Caco-2 (cell line): ENCODE measurements at regions of chr16 and their contacts with region 1.

Region 1: GRCh38 chr16:66872943-66873684 is 7.2 kb upstream of the PDP2 start:
- DNase-seq: peak; percentile 88 to 93
- H3K4me3 ChIP-seq: peak overlapping the region; percentile 46
- H3K4me3 Mint-ChIP-seq: peak overlapping the region; percentile 80
- H3K27ac Mint-ChIP-seq: peak overlapping the region; percentile 46
- H3K4me1 ChIP-seq: peaks cover 18% of the 10 kb centered on the region
- H3K4me1 Mint-ChIP-seq: peaks cover 20% of the 10 kb centered on the region
- H3K27me3 ChIP-seq: no peaks in the 10 kb centered on the region; the same call in 1 of the 2 replicates
- H3K27me3 Mint-ChIP-seq: no peaks in the 10 kb centered on the region
- CTCF ChIP-seq: peak; percentile 95 to 98

Region 2: DNA sequence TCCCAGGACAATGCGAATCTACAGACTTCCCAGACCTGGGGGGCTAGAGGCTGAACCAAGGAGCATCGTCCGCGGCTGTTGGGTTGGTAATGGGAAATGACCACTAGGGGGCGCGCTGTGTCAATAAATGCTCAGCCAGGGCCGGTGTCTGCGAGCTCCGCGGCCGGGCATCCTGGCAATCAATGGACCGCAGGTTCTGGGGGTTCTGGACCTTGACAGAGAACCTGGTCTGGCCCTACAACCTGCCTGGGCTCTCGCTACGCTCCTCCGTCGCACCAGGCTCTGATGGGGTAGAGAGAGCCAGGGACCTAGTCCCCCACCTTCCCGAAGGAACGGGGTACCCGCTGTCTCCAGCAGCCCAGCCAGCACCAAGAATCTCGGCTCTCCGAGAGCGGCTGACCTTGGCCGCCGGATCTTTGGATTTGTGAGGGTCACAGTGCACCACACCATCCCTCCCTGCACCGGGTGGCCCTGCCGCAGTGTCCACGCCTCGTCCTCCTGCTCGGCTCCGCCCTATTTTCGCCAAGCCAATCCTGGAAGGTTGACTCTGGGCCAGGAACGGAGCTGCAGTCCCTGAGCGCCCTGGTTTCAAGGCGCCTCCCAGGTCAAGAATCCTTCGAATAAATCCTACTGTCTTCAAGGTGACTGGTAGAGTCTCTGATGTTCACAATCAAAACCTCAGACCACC is 466.4 kb before region 1 on chr16:
- CTCF ChIA-PET with region 1: interaction called, 10 read pairs
- POLR2A ChIA-PET with region 1: interaction called, 8 read pairs
- intact Hi-C with region 1: loop called (anchors 5 kb)
- DNase-seq: peak; percentile 74 to 88
- H3K4me3 ChIP-seq: peak overlapping the region; percentile 34
- H3K4me3 Mint-ChIP-seq: peak overlapping the region; percentile 75
- H3K27ac Mint-ChIP-seq: no peak overlapping the region
- H3K4me1 ChIP-seq: peaks cover 15% of the 10 kb centered on the region; the same call in 1 of the 2 replicates
- H3K4me1 Mint-ChIP-seq: peaks cover 9% of the 10 kb centered on the region
- H3K27me3 ChIP-seq: no peaks in the 10 kb centered on the region
- H3K27me3 Mint-ChIP-seq: peaks cover 7% of the 10 kb centered on the region
- CTCF ChIP-seq: peak; percentile 81 to 93

Region 3: DNA sequence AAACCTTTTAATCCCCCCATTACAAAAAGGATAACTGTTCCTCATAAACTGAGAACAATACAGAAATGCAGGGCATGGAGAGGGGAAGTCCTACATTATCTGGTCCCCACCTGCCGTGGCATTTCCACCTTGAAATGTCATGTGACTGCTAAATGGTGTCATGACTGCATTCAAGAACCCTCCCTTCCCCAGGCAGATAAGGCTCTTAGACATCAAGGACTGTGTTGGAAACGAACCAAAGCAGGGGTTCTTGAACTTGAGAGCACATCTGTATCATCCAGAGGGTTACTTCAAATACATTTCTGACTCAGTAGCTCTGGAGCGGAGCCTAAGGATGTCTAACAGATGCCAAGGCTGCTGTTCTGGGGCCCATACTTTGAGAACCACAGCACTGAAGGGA is 250.3 kb before region 1 on chr16:
- CTCF ChIA-PET with region 1: no interaction called
- POLR2A ChIA-PET with region 1: no interaction called
- intact Hi-C with region 1: no loop called
- DNase-seq: no peak
- H3K4me3 ChIP-seq: no peak overlapping the region
- H3K4me3 Mint-ChIP-seq: no peak overlapping the region
- H3K27ac Mint-ChIP-seq: no peak overlapping the region
- H3K4me1 ChIP-seq: no peaks in the 10 kb centered on the region
- H3K4me1 Mint-ChIP-seq: no peaks in the 10 kb centered on the region
- H3K27me3 ChIP-seq: no peaks in the 10 kb centered on the region
- H3K27me3 Mint-ChIP-seq: no peaks in the 10 kb centered on the region
- CTCF ChIP-seq: no peak

Region 4: DNA sequence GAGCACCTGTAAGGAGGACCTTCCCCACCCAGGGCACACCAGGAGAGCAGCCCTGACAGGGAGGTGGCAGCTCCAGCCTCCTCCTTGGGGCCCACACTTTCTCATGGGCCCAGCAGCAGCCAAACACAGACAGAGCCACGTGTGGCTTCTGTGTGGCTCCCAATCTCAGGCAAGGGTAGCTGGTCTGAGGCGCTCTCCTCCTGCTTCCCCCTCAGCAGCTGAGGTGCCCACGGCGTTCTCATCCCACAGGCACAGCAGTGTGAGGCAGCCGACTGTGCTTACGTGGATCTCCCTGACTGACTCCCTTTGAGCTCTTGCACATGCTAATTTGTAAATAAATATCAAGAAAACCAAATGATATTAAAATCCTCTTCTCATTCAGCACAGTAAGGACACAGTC is 237.7 kb before region 1 on chr16:
- CTCF ChIA-PET with region 1: no interaction called
- POLR2A ChIA-PET with region 1: no interaction called
- intact Hi-C with region 1: no loop called
- DNase-seq: no peak
- H3K4me3 ChIP-seq: no peak overlapping the region
- H3K4me3 Mint-ChIP-seq: no peak overlapping the region
- H3K27ac Mint-ChIP-seq: no peak overlapping the region
- H3K4me1 ChIP-seq: no peaks in the 10 kb centered on the region
- H3K4me1 Mint-ChIP-seq: no peaks in the 10 kb centered on the region
- H3K27me3 ChIP-seq: no peaks in the 10 kb centered on the region
- H3K27me3 Mint-ChIP-seq: no peaks in the 10 kb centered on the region
- CTCF ChIP-seq: no peak

Region 5: DNA sequence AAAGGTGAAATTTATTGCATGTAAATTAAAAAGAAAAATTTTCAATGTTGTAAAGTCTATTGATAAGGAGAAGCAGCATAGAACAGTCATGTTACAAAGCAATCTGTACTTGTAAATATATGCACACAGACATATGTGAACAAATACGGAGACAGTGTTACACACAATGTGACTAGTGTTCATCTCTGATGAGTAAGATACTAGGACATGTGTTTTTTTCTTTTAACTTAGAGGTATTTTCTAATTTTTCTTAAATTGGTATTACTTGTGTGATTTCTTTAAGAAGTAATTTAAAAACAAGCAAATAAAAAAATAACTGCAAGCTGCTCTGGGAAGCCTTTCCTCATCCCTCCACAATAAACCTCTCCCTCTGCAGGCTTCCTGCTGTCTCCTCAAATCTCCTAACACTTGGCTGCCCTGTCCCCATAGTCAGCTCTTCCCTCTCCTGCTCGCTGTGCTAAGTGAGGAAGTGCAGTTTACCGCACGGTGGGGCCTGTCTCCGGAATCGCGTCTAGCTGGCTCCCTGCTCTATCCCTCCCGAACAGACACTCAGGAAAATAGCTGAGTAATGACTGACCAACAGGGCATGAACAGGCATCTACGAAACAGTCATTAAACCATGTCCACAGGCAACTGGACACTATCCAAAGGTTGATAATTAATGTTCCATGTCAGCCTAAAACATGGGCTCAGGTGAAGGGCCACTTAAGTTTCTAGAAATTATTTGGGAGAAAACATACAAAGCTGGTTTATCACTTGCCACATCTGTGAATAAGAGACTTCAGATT is 212.5 kb before region 1 on chr16:
- CTCF ChIA-PET with region 1: interaction called, 9 read pairs
- POLR2A ChIA-PET with region 1: no interaction called
- intact Hi-C with region 1: loop called (anchors 5 kb)
- DNase-seq: no peak
- H3K4me3 ChIP-seq: no peak overlapping the region
- H3K4me3 Mint-ChIP-seq: no peak overlapping the region
- H3K27ac Mint-ChIP-seq: no peak overlapping the region
- H3K4me1 ChIP-seq: no peaks in the 10 kb centered on the region
- H3K4me1 Mint-ChIP-seq: peaks cover 6% of the 10 kb centered on the region
- H3K27me3 ChIP-seq: no peaks in the 10 kb centered on the region
- H3K27me3 Mint-ChIP-seq: no peaks in the 10 kb centered on the region
- CTCF ChIP-seq: no peak

Region 6: DNA sequence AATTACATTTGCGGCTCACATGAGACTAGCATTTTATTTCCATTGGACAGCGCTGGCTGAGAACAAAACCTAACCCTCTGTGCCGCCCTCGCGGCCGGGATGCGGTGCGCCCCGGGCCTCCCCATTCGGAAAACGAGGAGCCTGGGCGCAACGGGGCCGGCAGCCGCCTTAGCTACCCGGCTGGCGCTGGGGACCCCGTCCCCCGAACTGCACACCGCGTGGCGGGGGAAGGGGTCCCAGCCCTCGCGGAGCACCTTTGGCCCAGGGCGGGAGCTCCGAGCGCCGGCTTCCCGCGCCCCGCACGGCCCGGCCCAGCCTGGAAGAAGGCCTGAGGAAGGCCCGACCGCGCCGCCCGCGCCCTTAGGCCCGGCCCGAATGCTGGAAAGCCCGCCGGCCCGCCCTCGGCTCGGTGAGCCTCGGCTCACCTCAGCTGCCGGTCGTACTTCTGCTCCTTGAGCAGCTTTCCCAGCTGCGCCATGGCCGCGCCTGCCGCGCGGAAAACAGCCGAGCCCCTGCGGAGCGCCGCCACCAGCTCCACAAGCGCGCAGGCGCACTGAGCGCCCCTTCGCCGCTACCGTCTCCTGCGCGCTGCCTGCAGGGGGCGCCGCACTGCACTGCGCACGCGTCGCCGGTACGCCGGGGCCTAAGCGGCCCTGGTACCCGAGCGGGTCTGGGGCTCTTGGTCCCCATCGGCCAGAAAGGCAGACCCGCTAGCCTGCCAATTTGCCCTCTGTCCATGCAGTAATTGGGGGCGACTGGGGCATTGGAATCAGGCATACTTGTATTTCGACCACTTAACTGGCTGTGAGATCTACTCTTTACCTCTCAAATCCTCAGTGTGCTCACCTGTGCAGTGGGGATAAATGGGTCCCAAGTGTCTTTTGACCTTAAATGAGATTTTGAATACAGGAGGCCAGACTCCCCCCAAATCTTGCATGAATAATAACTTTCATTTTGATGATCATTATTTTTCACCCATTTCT is 42.4 kb before region 1 on chr16 and contains the start of gene NAE1:
- CTCF ChIA-PET with region 1: interaction called, 136 read pairs
- POLR2A ChIA-PET with region 1: interaction called, 21 read pairs
- intact Hi-C with region 1: loop called (anchors 1 kb)
- DNase-seq: peak; percentile 86 to 96
- H3K4me3 ChIP-seq: peak within 1 kb of the TSS; percentile 77
- H3K4me3 Mint-ChIP-seq: peak within 1 kb of the TSS; percentile 65
- H3K27ac Mint-ChIP-seq: no peak within 1 kb of the TSS
- H3K4me1 ChIP-seq: no peaks in the 10 kb centered on the region; the same call in 1 of the 2 replicates
- H3K4me1 Mint-ChIP-seq: no peaks in the 10 kb centered on the region
- H3K27me3 ChIP-seq: no peaks in the 10 kb centered on the region
- H3K27me3 Mint-ChIP-seq: peaks cover 3% of the 10 kb centered on the region
- CTCF ChIP-seq: peak; percentile 97
- total RNA-seq, gene NAE1: 141 and 146 TPM in 2 replicates

Region 7: GRCh38 chr16:66849543-66849942 is 23.6 kb before region 1 on chr16:
- CTCF ChIA-PET with region 1: interaction called, 16 read pairs
- POLR2A ChIA-PET with region 1: no interaction called
- intact Hi-C with region 1: no loop called
- DNase-seq: no peak
- H3K4me3 ChIP-seq: no peak overlapping the region
- H3K4me3 Mint-ChIP-seq: no peak overlapping the region
- H3K27ac Mint-ChIP-seq: no peak overlapping the region
- H3K4me1 ChIP-seq: peaks cover 22% of the 10 kb centered on the region
- H3K4me1 Mint-ChIP-seq: peaks cover 21% of the 10 kb centered on the region
- H3K27me3 ChIP-seq: no peaks in the 10 kb centered on the region
- H3K27me3 Mint-ChIP-seq: peaks cover 7% of the 10 kb centered on the region
- CTCF ChIP-seq: no peak

Region 8: GRCh38 chr16:66924527-66925321 is 51.6 kb after region 1 on chr16:
- CTCF ChIA-PET with region 1: interaction called, 14 read pairs
- POLR2A ChIA-PET with region 1: no interaction called
- intact Hi-C with region 1: no loop called
- DNase-seq: peak in 1 of 2 experiments; percentile 76
- H3K4me3 ChIP-seq: peak overlapping the region; percentile 41
- H3K4me3 Mint-ChIP-seq: peak overlapping the region; percentile 73
- H3K27ac Mint-ChIP-seq: no peak overlapping the region
- H3K4me1 ChIP-seq: peaks cover 7% of the 10 kb centered on the region; the same call in 1 of the 2 replicates
- H3K4me1 Mint-ChIP-seq: no peaks in the 10 kb centered on the region
- H3K27me3 ChIP-seq: no peaks in the 10 kb centered on the region
- H3K27me3 Mint-ChIP-seq: peaks cover 5% of the 10 kb centered on the region
- CTCF ChIP-seq: peak; percentile 38 to 48